ENCODE measurements at regions of chr10 and their contacts with region 1.

Region 1: GRCh38 chr10:93376372-93377293 is 105.5 kb downstream of the MYOF start:
- DNase-seq: peak; percentile 41
- ATAC-seq: peak; percentile 20
- H3K4me3 Mint-ChIP-seq: no peak overlapping the region
- H3K27ac Mint-ChIP-seq: no peak overlapping the region
- H3K4me1 Mint-ChIP-seq: peaks cover 51% of the 10 kb centered on the region
- H3K27me3 Mint-ChIP-seq: peaks cover 5% of the 10 kb centered on the region

Region 2: GRCh38 chr10:93386631-93387369 is 10.2 kb after region 1 on chr10:
- CTCF ChIA-PET with region 1: interaction called, 68 read pairs
- POLR2A ChIA-PET with region 1: no interaction called
- intact Hi-C with region 1: no loop called
- DNase-seq: peak; percentile 19
- ATAC-seq: peak; percentile 69
- H3K4me3 Mint-ChIP-seq: no peak overlapping the region
- H3K27ac Mint-ChIP-seq: peak overlapping the region; percentile 55
- H3K4me1 Mint-ChIP-seq: peaks cover 29% of the 10 kb centered on the region
- H3K27me3 Mint-ChIP-seq: no peaks in the 10 kb centered on the region

Region 3: GRCh38 chr10:93471110-93471651 is 94.5 kb after region 1 on chr10:
- CTCF ChIA-PET with region 1: interaction called, 18 read pairs
- POLR2A ChIA-PET with region 1: no interaction called
- intact Hi-C with region 1: no loop called
- DNase-seq: no peak
- ATAC-seq: peak; percentile 93
- H3K4me3 Mint-ChIP-seq: no peak overlapping the region
- H3K27ac Mint-ChIP-seq: peak overlapping the region; percentile 39
- H3K4me1 Mint-ChIP-seq: peaks cover 19% of the 10 kb centered on the region
- H3K27me3 Mint-ChIP-seq: no peaks in the 10 kb centered on the region

Region 4: DNA sequence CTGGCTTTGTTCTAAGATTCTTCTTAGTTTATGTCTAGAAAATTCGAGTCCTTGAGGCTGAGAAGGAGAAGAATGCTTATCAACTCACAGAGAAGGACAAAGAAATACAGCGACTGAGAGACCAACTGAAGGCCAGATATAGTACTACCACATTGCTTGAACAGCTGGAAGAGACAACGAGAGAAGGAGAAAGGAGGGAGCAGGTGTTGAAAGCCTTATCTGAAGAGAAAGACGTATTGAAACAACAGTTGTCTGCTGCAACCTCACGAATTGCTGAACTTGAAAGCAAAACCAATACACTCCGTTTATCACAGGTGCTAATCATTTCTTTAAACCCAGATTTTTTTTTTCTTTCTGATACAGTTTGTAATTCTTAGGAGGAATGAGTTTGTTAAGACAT is 126.4 kb after region 1 on chr10:
- CTCF ChIA-PET with region 1: interaction called, 115 read pairs
- POLR2A ChIA-PET with region 1: no interaction called
- intact Hi-C with region 1: loop called in 1 of 2 experiments (anchors 5 kb)
- DNase-seq: no peak
- ATAC-seq: peak; percentile 79
- H3K4me3 Mint-ChIP-seq: no peak overlapping the region
- H3K27ac Mint-ChIP-seq: peak overlapping the region; percentile 27
- H3K4me1 Mint-ChIP-seq: peaks cover 45% of the 10 kb centered on the region
- H3K27me3 Mint-ChIP-seq: no peaks in the 10 kb centered on the region

Region 5: GRCh38 chr10:93680412-93681047 is 303.9 kb after region 1 on chr10:
- CTCF ChIA-PET with region 1: interaction called, 5 read pairs
- POLR2A ChIA-PET with region 1: no interaction called
- intact Hi-C with region 1: loop called in 1 of 2 experiments (anchors 5 kb)
- DNase-seq: no peak
- ATAC-seq: no peak
- H3K4me3 Mint-ChIP-seq: no peak overlapping the region
- H3K27ac Mint-ChIP-seq: no peak overlapping the region
- H3K4me1 Mint-ChIP-seq: no peaks in the 10 kb centered on the region
- H3K27me3 Mint-ChIP-seq: no peaks in the 10 kb centered on the region

Region 6: GRCh38 chr10:93859049-93859655 is 482.5 kb after region 1 on chr10:
- CTCF ChIA-PET with region 1: no interaction called
- POLR2A ChIA-PET with region 1: no interaction called
- intact Hi-C with region 1: no loop called
- DNase-seq: no peak
- ATAC-seq: no peak
- H3K4me3 Mint-ChIP-seq: no peak overlapping the region
- H3K27ac Mint-ChIP-seq: no peak overlapping the region
- H3K4me1 Mint-ChIP-seq: no peaks in the 10 kb centered on the region
- H3K27me3 Mint-ChIP-seq: peaks cover 6% of the 10 kb centered on the region